Gastrocnemius medialis (tissue), 4 donors: ENCODE measurements at regions of chr2 and their contacts with region 1.

Region 1: GRCh38 chr2:21118302-21118920 is 5.4 kb upstream of the TDRD15 start:
- DNase-seq: peak in 1 of 2 donors; percentile 27
- ATAC-seq: peak; percentile 36 to 49
- H3K4me3 ChIP-seq: no peak overlapping the region
- H3K27ac ChIP-seq: no peak overlapping the region
- H3K4me1 ChIP-seq: no peaks in the 10 kb centered on the region
- H3K27me3 ChIP-seq: no peaks in the 10 kb centered on the region
- CTCF ChIP-seq: peak; percentile 25 to 50 (median 48)
- POLR2A ChIP-seq: no peak

Region 2: GRCh38 chr2:20650880-20651730 is 467.3 kb before region 1 on chr2 and contains the start of gene HS1BP3:
- in situ Hi-C with region 1: loop called in 1 of 4 experiments (anchors 25 kb)
- intact Hi-C with region 1: no loop called
- DNase-seq: peak; percentile 67 to 76
- ATAC-seq: peak; percentile 89 to 93
- H3K4me3 ChIP-seq: peak within 1 kb of the TSS; percentile 73 to 99 (median 94)
- H3K27ac ChIP-seq: peak within 1 kb of the TSS; percentile 78 to 92 (median 88)
- H3K4me1 ChIP-seq: peaks cover 15 to 18% of the 10 kb centered on the region in 2 donors
- H3K27me3 ChIP-seq: no peaks in the 10 kb centered on the region
- CTCF ChIP-seq: peak in 4 of 5 experiments; percentile 98 to 100 (median 99)
- POLR2A ChIP-seq: peak; percentile 81 to 83
- total RNA-seq, gene HS1BP3: 16.6 to 26.9 (median 19.4) TPM

Region 3: DNA sequence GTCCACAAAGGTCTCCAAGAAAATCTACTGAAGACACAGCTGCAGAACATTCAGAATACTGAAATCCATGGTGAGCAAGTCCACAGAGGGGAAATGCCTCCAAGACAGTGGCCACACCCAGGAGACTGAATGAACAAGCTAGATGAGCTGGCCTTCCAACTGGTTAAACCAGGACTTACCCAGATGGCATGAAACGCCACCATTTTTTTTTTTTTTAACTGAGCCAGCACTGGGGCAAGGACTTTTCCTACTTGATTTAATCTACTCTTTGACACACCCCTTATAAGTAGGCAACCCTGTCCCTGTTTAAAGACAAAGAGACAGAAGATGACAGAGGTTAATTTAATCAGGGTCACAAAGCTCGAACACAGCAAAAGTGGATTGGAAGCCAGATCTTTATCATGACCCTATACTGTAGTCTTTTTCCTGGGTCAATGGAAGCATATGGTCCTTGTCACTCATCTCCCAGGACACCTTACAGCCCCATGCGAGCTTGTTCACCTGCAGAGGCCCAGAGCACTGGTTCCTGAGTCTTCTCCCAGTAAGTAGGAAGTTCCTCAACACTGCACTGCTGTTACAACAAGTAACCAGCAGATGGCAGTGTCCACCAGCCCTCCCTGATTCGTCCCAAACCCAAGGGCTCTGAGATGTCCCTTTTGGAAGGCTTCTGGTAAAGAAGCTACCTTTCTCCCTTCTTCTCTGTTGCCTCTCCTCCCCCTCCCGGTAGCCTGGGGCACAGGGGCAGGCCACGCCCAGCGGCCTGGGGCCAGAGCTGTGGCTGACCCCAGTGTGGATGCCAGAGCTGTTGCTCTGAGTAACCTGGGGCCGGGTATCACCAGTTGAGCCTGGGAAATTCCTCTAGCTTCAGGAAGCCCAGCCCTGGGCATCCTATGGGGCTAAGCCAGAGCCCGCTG is 457.1 kb before region 1 on chr2:
- in situ Hi-C with region 1: loop called in 3 of 4 experiments (anchors 10 to 25 kb)
- intact Hi-C with region 1: loop called (anchors 2 kb)
- DNase-seq: peak; percentile 35 to 57
- ATAC-seq: peak; percentile 86 to 87
- H3K4me3 ChIP-seq: no peak overlapping the region
- H3K27ac ChIP-seq: no peak overlapping the region
- H3K4me1 ChIP-seq: peaks cover 0 to 13% of the 10 kb centered on the region in 2 donors
- H3K27me3 ChIP-seq: peaks cover 38 to 43% (median 42%) of the 10 kb centered on the region in 3 donors
- CTCF ChIP-seq: peak; percentile 84 to 97 (median 91)
- POLR2A ChIP-seq: no peak

Region 4: DNA sequence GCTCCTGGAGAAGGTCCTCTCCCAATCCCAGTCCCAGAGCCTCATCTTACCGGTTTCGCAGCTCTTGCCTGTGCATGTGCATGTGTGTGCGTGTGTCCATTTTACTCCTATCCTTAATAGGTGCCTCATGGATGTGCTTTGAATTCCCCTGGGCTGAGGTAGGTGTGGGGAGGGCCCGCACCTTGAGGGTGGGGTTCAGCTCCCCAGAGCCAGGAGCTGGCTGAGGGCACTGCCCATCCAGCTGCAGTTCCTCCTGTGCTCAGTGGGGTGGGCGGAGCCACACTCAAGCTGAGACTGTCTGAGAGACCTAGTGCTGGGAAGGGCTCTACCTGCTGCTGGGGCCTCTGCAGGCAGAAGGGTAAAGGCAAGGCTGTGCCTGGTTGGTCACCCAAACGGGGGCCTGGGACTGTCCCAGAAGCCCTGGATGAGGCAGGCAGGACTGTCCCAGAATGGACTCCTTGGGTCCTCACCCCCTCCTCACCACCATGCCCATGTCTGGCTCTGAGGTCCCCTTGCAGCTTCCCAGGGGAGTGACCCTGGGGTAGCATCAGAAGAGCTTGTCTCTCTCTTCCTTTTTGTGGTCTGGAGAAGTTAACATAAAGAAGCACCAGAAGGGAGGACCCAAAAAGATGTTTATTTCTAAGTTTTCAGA is 442.6 kb before region 1 on chr2:
- in situ Hi-C with region 1: loop called in 2 of 4 experiments (anchors 25 kb)
- intact Hi-C with region 1: no loop called
- DNase-seq: no peak
- ATAC-seq: no peak
- H3K4me3 ChIP-seq: no peak overlapping the region
- H3K27ac ChIP-seq: no peak overlapping the region
- H3K4me1 ChIP-seq: no peaks in the 10 kb centered on the region
- H3K27me3 ChIP-seq: peaks cover 21 to 37% (median 32%) of the 10 kb centered on the region in 3 donors
- CTCF ChIP-seq: no peak
- POLR2A ChIP-seq: no peak

Region 5: GRCh38 chr2:20781656-20782265 is 336.6 kb before region 1 on chr2:
- in situ Hi-C with region 1: no loop called
- intact Hi-C with region 1: loop called (anchors 5 kb)
- DNase-seq: no peak
- ATAC-seq: no peak
- H3K4me3 ChIP-seq: no peak overlapping the region
- H3K27ac ChIP-seq: no peak overlapping the region
- H3K4me1 ChIP-seq: no peaks in the 10 kb centered on the region
- H3K27me3 ChIP-seq: no peaks in the 10 kb centered on the region
- CTCF ChIP-seq: peak in 3 of 5 experiments; percentile 13 to 40 (median 28)
- POLR2A ChIP-seq: no peak

Region 6: DNA sequence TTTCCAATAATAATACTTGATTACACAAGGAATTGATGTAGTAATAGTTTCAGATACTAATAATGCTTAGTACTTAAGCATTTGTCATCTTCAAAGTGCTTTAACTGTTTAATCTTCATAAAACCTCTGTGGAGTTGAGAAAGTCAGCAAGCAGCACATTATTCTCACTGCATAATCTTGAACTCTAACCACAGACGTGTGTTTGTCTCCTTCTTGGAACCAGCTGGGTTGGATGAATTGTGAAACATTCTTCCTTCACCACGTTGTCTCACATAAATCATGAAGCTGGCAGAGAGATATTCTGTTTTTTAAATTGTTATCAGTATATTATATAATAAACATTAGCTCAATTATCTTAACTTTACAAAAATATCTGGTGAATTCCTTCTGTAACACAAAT is 240.5 kb before region 1 on chr2:
- in situ Hi-C with region 1: no loop called
- intact Hi-C with region 1: no loop called
- DNase-seq: no peak
- ATAC-seq: no peak
- H3K4me3 ChIP-seq: no peak overlapping the region
- H3K27ac ChIP-seq: no peak overlapping the region
- H3K4me1 ChIP-seq: no peaks in the 10 kb centered on the region
- H3K27me3 ChIP-seq: no peaks in the 10 kb centered on the region
- CTCF ChIP-seq: no peak
- POLR2A ChIP-seq: no peak

Region 7: DNA sequence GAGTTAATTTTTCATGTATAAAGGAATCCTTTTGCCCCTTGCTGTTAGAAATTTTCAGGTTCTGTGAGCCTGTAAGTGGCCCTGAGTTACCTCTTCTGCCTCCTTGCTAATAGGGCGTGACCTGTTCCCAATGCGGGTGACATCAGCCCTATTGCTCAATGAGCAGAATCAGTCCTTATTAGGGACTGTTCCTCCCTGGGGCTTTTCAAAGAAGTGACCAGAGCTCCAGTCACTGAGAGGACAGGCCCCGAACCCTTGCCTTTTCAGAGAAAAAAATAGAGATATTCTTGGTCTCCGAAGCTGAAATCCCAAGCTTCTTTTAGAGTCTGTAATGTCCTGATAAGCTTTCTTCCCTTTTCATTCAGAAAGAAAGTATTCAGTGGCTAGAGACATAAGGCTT is 66.4 kb before region 1 on chr2:
- in situ Hi-C with region 1: loop called in 3 of 4 experiments (anchors 5 kb)
- intact Hi-C with region 1: no loop called
- DNase-seq: peak in 1 of 2 donors; percentile 44
- ATAC-seq: peak; percentile 76 to 78
- H3K4me3 ChIP-seq: no peak overlapping the region
- H3K27ac ChIP-seq: peak overlapping the region in 1 of 4 donors; percentile 26
- H3K4me1 ChIP-seq: no peaks in the 10 kb centered on the region
- H3K27me3 ChIP-seq: no peaks in the 10 kb centered on the region
- CTCF ChIP-seq: no peak
- POLR2A ChIP-seq: no peak

Region 8: GRCh38 chr2:21146638-21147037 is 28.2 kb after region 1 on chr2:
- in situ Hi-C with region 1: no loop called
- intact Hi-C with region 1: no loop called
- DNase-seq: no peak
- ATAC-seq: no peak
- H3K4me3 ChIP-seq: no peak overlapping the region
- H3K27ac ChIP-seq: no peak overlapping the region
- H3K4me1 ChIP-seq: no peaks in the 10 kb centered on the region
- H3K27me3 ChIP-seq: no peaks in the 10 kb centered on the region
- CTCF ChIP-seq: no peak
- POLR2A ChIP-seq: no peak